Endothelial cell of umbilical vein (primary cell): ENCODE measurements at regions of chr1 and their contacts with region 1.

Region 1: GRCh38 chr1:63442141-63442475 is 74.7 kb downstream of the ALG6 start:
- DNase-seq: no peak
- H3K4me3 ChIP-seq: no peak overlapping the region
- H3K27ac ChIP-seq: no peak overlapping the region
- H3K4me1 ChIP-seq: no peaks in the 10 kb centered on the region
- H3K27me3 ChIP-seq: no peaks in the 10 kb centered on the region
- CTCF ChIP-seq: no peak
- POLR2A ChIP-seq: no peak

Region 2: DNA sequence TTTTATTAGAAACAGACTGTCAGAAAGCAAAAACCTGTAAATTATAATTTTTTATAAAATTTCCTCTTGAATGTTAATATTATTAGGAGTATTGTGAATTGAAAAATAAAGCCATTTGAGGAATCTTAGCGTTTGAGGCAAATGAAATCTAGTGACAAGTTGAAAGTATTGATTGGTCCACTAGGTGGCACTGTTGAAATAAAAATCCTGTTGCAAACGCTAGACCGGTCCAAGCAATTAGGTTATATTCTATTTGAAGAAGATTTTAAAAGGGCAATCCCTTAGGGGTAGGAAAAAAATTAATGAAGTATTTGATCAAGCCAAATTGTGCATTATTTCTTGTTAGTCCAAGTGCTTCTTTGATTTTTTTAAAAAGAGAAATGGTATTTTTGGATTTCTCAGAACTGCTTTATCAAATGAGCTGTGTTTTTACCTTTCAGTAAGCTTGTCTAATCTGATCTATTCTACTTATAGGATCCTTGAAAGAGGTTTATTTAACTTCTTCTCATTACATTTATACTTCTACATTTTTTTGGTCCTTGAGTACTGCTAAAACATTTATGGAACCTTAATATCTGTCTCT is 600.4 kb before region 1 on chr1:
- CTCF ChIA-PET with region 1: interaction called, 6 read pairs
- POLR2A ChIA-PET with region 1: no interaction called
- dilution Hi-C with region 1: no loop called
- intact Hi-C with region 1: loop called (anchors 1 kb)
- DNase-seq: peak; percentile 70
- H3K4me3 ChIP-seq: no peak overlapping the region
- H3K27ac ChIP-seq: no peak overlapping the region
- H3K4me1 ChIP-seq: no peaks in the 10 kb centered on the region
- H3K27me3 ChIP-seq: no peaks in the 10 kb centered on the region
- CTCF ChIP-seq: peak; percentile 35 to 37
- POLR2A ChIP-seq: no peak

Region 3: GRCh38 chr1:63004868-63005267 is 437.2 kb before region 1 on chr1:
- CTCF ChIA-PET with region 1: interaction called, 7 read pairs
- POLR2A ChIA-PET with region 1: no interaction called
- dilution Hi-C with region 1: no loop called
- intact Hi-C with region 1: loop called (anchors 1 kb)
- DNase-seq: no peak
- H3K4me3 ChIP-seq: no peak overlapping the region
- H3K27ac ChIP-seq: no peak overlapping the region
- H3K4me1 ChIP-seq: no peaks in the 10 kb centered on the region
- H3K27me3 ChIP-seq: peaks cover 0 to 5% of the 10 kb centered on the region in 2 experiments
- CTCF ChIP-seq: no peak
- POLR2A ChIP-seq: no peak

Region 4: DNA sequence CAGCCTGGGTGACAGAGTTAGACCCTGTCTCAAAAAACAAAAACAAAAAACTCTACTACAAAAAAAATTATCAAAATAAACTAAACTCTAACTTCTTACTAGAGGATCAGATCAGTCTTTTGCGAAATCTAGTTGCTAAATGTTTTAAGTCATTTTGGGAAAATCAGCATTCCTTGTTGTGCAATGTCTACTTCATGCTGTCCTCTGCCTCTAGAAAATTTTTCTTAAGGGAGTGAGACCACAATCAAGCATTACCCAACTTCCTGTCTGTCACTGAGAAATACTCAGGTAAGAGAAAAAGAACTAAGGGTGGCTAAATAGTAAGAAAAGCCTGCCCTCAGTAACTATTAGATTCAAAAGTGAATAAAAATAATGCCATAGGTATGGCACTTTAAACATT is 187.0 kb before region 1 on chr1:
- CTCF ChIA-PET with region 1: no interaction called
- POLR2A ChIA-PET with region 1: no interaction called
- dilution Hi-C with region 1: no loop called
- intact Hi-C with region 1: no loop called
- DNase-seq: no peak
- H3K4me3 ChIP-seq: no peak overlapping the region
- H3K27ac ChIP-seq: no peak overlapping the region
- H3K4me1 ChIP-seq: no peaks in the 10 kb centered on the region
- H3K27me3 ChIP-seq: no peaks in the 10 kb centered on the region
- CTCF ChIP-seq: no peak
- POLR2A ChIP-seq: no peak

Region 5: DNA sequence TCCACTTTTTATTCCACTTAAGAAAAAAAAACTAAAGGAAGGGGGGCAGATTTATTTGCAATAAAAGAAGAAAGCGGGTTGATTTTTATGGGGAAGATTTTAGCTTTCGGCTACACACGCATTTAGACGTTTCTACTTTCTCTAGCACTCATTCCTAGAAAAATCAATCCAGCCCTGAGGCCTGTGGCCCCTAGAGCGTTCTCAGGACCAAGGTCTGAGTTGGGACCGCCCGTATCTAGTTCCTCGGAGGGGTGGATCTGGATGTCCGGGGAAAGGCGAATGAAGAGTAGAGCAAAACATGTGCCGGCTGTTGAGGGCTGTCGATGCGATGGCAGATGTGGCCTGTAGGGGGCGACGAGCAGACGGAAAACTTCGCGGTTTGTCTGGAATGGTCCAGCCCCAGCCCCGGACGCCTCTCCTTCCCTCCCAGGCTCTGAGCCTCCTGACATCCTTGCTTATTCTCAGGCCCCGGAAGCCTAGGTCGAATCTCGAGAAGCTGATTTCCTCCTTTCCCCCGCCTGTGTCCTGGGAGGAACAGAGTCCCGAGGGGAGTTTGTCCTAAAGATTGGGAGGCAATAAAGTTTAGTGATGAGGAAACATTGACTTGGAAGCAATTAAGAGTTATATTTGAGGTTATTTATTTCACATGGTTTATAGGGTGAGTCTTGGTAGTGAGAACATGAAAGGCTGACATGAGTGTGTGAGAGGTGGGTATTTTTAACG is 114.5 kb before region 1 on chr1:
- CTCF ChIA-PET with region 1: interaction called, 12 read pairs
- POLR2A ChIA-PET with region 1: no interaction called
- dilution Hi-C with region 1: no loop called
- intact Hi-C with region 1: loop called (anchors 1 kb)
- DNase-seq: peak; percentile 57
- H3K4me3 ChIP-seq: no peak overlapping the region
- H3K27ac ChIP-seq: no peak overlapping the region
- H3K4me1 ChIP-seq: no peaks in the 10 kb centered on the region
- H3K27me3 ChIP-seq: peaks cover 74 to 100% of the 10 kb centered on the region in 2 experiments
- CTCF ChIP-seq: peak; percentile 82 to 90
- POLR2A ChIP-seq: no peak

Region 6: GRCh38 chr1:63381741-63382140 is 60.4 kb before region 1 on chr1:
- CTCF ChIA-PET with region 1: no interaction called
- POLR2A ChIA-PET with region 1: no interaction called
- dilution Hi-C with region 1: no loop called
- intact Hi-C with region 1: no loop called
- DNase-seq: no peak
- H3K4me3 ChIP-seq: no peak overlapping the region
- H3K27ac ChIP-seq: no peak overlapping the region
- H3K4me1 ChIP-seq: no peaks in the 10 kb centered on the region
- H3K27me3 ChIP-seq: no peaks in the 10 kb centered on the region
- CTCF ChIP-seq: no peak
- POLR2A ChIP-seq: no peak

Region 7: DNA sequence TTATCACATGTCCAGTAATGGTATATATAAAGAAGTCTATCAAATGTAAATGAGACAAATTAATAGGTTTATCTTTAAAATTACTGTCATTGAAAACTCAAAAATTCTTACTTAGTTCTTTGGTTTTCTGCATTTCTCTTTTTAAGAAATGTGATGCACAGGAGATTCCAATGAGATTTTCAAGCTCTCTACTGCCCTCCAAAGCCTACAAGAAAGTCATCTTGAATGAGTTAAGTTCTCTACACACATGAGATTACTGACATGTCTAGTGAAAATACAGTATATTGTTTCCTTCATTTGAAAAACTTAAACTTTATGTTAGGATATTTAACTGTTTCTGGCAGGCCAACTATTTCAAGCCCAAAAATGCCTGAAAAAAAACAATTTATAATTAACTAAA is 12.2 kb after region 1 on chr1:
- CTCF ChIA-PET with region 1: interaction called, 18 read pairs
- POLR2A ChIA-PET with region 1: no interaction called
- dilution Hi-C with region 1: no loop called
- intact Hi-C with region 1: no loop called
- DNase-seq: peak; percentile 11
- H3K4me3 ChIP-seq: no peak overlapping the region
- H3K27ac ChIP-seq: no peak overlapping the region
- H3K4me1 ChIP-seq: no peaks in the 10 kb centered on the region
- H3K27me3 ChIP-seq: no peaks in the 10 kb centered on the region
- CTCF ChIP-seq: no peak
- POLR2A ChIP-seq: no peak